Head of caudate nucleus (tissue), 42 donors: ENCODE measurements at regions of chr10 and their contacts with region 1.

Region 1: DNA sequence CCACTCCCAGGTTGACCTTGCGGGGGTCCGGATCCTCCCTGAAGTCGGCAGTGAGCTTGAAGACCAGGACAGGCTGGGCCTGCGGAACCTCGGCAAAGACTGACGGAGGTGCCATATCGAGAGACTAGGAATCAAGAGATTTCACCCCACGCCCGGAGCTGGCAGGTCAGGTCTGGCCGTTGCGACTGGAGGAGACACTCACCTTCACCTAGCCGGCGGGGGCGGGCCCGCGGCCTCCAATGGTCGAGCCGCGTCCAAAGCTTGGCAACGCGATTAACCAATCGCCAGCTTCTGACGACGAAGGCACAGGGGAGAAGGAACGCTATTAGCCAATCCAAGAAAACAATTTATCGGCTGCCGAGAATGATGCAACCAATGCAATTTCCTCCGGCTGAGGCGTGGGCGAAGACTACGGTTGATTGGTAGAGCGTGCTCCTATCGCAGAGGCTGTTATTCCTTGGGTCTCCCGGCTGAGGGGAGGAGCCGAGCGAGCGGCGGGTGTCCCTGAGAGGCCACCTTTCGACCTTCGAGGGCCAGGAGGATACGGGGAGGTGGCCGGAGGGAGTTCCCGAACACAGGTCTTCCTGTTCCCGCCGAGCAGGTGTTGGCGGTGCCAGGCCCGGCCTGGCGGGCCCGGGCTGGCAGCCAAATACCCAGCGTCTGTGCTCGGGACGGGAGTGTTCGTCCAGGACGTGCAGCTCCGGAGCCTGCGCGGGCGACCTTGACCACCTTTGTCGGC is at the start of gene GOT1:
- DNase-seq: peak; percentile 92 to 98 (median 97)

Region 2: GRCh38 chr10:99484603-99485581 is 54.3 kb after region 1 on chr10:
- intact Hi-C with region 1: no loop called
- DNase-seq: no peak

Region 3: DNA sequence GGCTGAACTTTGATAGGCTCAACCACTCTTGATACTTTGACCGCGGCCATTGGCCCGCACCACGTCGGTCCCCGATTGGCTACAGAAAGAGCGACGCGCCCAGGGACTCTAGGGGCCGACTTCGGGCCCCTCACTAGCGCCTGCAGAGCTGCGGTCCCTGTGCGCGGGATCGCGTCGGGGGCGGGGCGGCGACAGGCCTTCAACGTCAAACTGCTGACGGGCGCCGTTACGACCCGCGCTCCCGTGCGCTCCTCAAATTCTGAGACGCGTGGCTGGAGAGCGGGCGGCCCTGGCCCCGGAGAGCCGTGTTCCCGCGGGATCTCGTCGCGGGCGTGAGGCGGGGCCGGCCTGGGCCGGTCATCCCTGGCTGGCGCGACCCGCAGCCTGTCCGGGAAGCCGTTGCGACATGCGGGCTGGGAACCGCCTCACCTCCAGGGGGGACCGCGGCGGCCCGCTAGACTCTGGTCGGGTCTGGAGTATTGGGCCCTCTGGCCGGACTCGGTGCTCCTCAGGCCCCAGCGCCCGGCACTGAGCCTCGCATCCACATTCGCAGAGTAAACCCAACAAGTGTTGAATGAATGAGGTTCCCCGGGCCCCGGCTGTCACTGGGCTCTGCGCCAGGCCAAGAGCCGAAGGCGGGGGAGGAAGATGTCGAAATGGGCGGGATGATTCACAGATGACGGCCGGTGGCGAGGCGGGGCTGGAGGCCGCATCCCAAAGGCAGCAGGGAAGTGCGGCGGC is 190.3 kb after region 1 on chr10:
- intact Hi-C with region 1: loop called (anchors 2 kb)
- DNase-seq: peak; percentile 83 to 99 (median 90)

Region 4: GRCh38 chr10:99711129-99711719 is 280.6 kb after region 1 on chr10:
- intact Hi-C with region 1: loop called (anchors 10 kb)
- DNase-seq: peak in 20 of 42 donors; percentile 4 to 63 (median 40)